ENCODE measurements at regions of chr4 and their contacts with region 1.

Region 1: GRCh38 chr4:83110223-83110945 is 4.1 kb downstream of the PLAC8 start:
- DNase-seq: peak; percentile 81 to 89 (median 87)
- ATAC-seq: peak; percentile 88
- H3K4me3 ChIP-seq: peak overlapping the region; percentile 82
- H3K4me3 Mint-ChIP-seq: peak overlapping the region; percentile 94 to 99 (median 98)
- H3K27ac ChIP-seq: peak overlapping the region; percentile 88
- H3K27ac Mint-ChIP-seq: peak overlapping the region; percentile 92 to 99 (median 98)
- H3K4me1 ChIP-seq: peaks cover 24 to 35% of the 10 kb centered on the region in 2 donors
- H3K4me1 Mint-ChIP-seq: peaks cover 26 to 60% (median 45%) of the 10 kb centered on the region in 7 donors
- H3K27me3 ChIP-seq: no peaks in the 10 kb centered on the region
- H3K27me3 Mint-ChIP-seq: no peaks in the 10 kb centered on the region

Region 2: DNA sequence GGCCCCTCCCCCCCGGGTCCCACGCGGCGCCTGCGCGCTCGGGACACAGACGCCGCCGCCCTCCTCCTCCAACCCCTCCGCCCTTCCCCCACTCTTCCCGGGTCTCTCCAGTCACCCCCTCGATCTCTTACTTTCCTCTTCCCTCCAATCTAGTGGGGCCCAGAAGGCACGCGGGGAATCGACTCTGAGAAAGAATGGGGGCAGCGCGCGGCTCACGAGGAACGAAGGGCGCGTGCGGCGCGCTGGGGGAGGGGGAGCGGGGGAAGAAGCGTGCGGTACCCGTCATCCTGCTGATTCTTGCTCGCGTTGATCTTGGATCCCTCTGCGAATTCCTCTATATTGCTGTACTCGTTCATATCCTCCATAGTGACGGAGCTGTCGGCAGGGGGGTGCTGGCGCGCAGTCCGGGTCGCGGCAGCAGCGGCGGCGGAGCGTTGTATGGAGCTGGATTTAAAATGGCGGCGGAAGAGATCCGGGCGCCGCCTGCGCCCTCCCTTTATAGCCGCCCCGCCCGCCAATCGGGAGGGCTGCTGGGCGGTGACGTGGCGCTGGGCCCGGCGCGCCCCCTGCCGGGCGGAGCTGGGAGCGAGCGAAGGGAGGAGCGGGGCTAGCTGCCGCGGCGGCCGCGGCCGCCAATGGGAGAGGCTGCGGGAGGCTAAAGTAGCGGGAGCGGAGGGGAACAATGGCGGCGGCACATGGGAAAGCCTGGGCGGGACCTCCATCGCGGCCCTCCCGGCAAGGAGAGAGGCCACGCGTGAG is 681.2 kb before region 1 on chr4:
- CTCF ChIA-PET with region 1: no interaction called
- POLR2A ChIA-PET with region 1: no interaction called
- intact Hi-C with region 1: loop called in 1 of 2 experiments (anchors 10 kb)
- DNase-seq: peak; percentile 90 to 99 (median 94)
- ATAC-seq: peak; percentile 79
- H3K4me3 ChIP-seq: peak overlapping the region; percentile 96
- H3K4me3 Mint-ChIP-seq: peak overlapping the region; percentile 98 to 100 (median 99)
- H3K27ac ChIP-seq: peak overlapping the region; percentile 99
- H3K27ac Mint-ChIP-seq: peak overlapping the region; percentile 98 to 100 (median 99)
- H3K4me1 ChIP-seq: peaks cover 28 to 39% of the 10 kb centered on the region in 2 donors
- H3K4me1 Mint-ChIP-seq: peaks cover 40 to 81% (median 69%) of the 10 kb centered on the region in 7 donors
- H3K27me3 ChIP-seq: no peaks in the 10 kb centered on the region
- H3K27me3 Mint-ChIP-seq: peaks cover 0 to 2% (median 0%) of the 10 kb centered on the region in 5 donors

Region 3: GRCh38 chr4:83034630-83035494 is 75.5 kb before region 1 on chr4 and contains the start of gene COPS4:
- CTCF ChIA-PET with region 1: interaction called, 3 read pairs
- POLR2A ChIA-PET with region 1: interaction called, 7 read pairs
- intact Hi-C with region 1: loop called (anchors 2 kb)
- DNase-seq: peak; percentile 77 to 98 (median 97)
- ATAC-seq: peak; percentile 99
- H3K4me3 ChIP-seq: peak within 1 kb of the TSS; percentile 98
- H3K4me3 Mint-ChIP-seq: peak within 1 kb of the TSS; percentile 92 to 100 (median 98)
- H3K27ac ChIP-seq: peak within 1 kb of the TSS; percentile 94
- H3K27ac Mint-ChIP-seq: peak within 1 kb of the TSS; percentile 94 to 100 (median 97)
- H3K4me1 ChIP-seq: peaks cover 4 to 19% of the 10 kb centered on the region in 2 donors
- H3K4me1 Mint-ChIP-seq: peaks cover 19 to 44% (median 35%) of the 10 kb centered on the region in 7 donors
- H3K27me3 ChIP-seq: no peaks in the 10 kb centered on the region
- H3K27me3 Mint-ChIP-seq: no peaks in the 10 kb centered on the region
- total RNA-seq, gene COPS4: 23.5 to 32.8 (median 24.7) TPM

Region 4: GRCh38 chr4:83093130-83093529 is 17.3 kb before region 1 on chr4:
- CTCF ChIA-PET with region 1: interaction called, 9 read pairs
- POLR2A ChIA-PET with region 1: interaction called, 58 read pairs
- intact Hi-C with region 1: loop called in 1 of 2 experiments (anchors 2 kb)
- DNase-seq: no peak
- ATAC-seq: no peak
- H3K4me3 ChIP-seq: no peak overlapping the region
- H3K4me3 Mint-ChIP-seq: no peak overlapping the region
- H3K27ac ChIP-seq: peak overlapping the region; percentile 41
- H3K27ac Mint-ChIP-seq: peak overlapping the region in 8 of 9 donors; percentile 20 to 92 (median 78)
- H3K4me1 ChIP-seq: peaks cover 0 to 17% of the 10 kb centered on the region in 2 donors
- H3K4me1 Mint-ChIP-seq: peaks cover 37 to 76% (median 56%) of the 10 kb centered on the region in 7 donors
- H3K27me3 ChIP-seq: no peaks in the 10 kb centered on the region
- H3K27me3 Mint-ChIP-seq: no peaks in the 10 kb centered on the region

Region 5: GRCh38 chr4:83212041-83212851 is 101.9 kb after region 1 on chr4:
- CTCF ChIA-PET with region 1: interaction called, 16 read pairs
- POLR2A ChIA-PET with region 1: interaction called, 61 read pairs
- intact Hi-C with region 1: loop called (anchors 1 kb)
- DNase-seq: peak in 7 of 9 donors; percentile 72 to 96 (median 90)
- ATAC-seq: peak; percentile 95
- H3K4me3 ChIP-seq: peak overlapping the region; percentile 38
- H3K4me3 Mint-ChIP-seq: peak overlapping the region; percentile 49 to 90 (median 68)
- H3K27ac ChIP-seq: peak overlapping the region; percentile 67
- H3K27ac Mint-ChIP-seq: peak overlapping the region; percentile 83 to 99 (median 92)
- H3K4me1 ChIP-seq: peaks cover 67 to 69% of the 10 kb centered on the region in 2 donors
- H3K4me1 Mint-ChIP-seq: peaks cover 55 to 84% (median 79%) of the 10 kb centered on the region in 7 donors
- H3K27me3 ChIP-seq: no peaks in the 10 kb centered on the region
- H3K27me3 Mint-ChIP-seq: peaks cover 0 to 17% (median 0%) of the 10 kb centered on the region in 5 donors

Region 6: GRCh38 chr4:83237591-83237990 is 127.2 kb after region 1 on chr4:
- CTCF ChIA-PET with region 1: interaction called, 4 read pairs
- POLR2A ChIA-PET with region 1: interaction called, 7 read pairs
- intact Hi-C with region 1: loop called in 1 of 2 experiments (anchors 1 kb)
- DNase-seq: no peak
- ATAC-seq: no peak
- H3K4me3 ChIP-seq: no peak overlapping the region
- H3K4me3 Mint-ChIP-seq: no peak overlapping the region
- H3K27ac ChIP-seq: no peak overlapping the region
- H3K27ac Mint-ChIP-seq: peak overlapping the region in 1 of 9 donors; percentile 32
- H3K4me1 ChIP-seq: peaks cover 22 to 29% of the 10 kb centered on the region in 2 donors
- H3K4me1 Mint-ChIP-seq: peaks cover 40 to 70% (median 63%) of the 10 kb centered on the region in 7 donors
- H3K27me3 ChIP-seq: no peaks in the 10 kb centered on the region
- H3K27me3 Mint-ChIP-seq: peaks cover 0 to 57% (median 0%) of the 10 kb centered on the region in 5 donors

Measured in naive thymus-derived CD4-positive, alpha-beta T cell (primary cell).